Heart right ventricle (tissue), 16 donors: ENCODE measurements at regions of chr4 and their contacts with region 1.

Region 1: DNA sequence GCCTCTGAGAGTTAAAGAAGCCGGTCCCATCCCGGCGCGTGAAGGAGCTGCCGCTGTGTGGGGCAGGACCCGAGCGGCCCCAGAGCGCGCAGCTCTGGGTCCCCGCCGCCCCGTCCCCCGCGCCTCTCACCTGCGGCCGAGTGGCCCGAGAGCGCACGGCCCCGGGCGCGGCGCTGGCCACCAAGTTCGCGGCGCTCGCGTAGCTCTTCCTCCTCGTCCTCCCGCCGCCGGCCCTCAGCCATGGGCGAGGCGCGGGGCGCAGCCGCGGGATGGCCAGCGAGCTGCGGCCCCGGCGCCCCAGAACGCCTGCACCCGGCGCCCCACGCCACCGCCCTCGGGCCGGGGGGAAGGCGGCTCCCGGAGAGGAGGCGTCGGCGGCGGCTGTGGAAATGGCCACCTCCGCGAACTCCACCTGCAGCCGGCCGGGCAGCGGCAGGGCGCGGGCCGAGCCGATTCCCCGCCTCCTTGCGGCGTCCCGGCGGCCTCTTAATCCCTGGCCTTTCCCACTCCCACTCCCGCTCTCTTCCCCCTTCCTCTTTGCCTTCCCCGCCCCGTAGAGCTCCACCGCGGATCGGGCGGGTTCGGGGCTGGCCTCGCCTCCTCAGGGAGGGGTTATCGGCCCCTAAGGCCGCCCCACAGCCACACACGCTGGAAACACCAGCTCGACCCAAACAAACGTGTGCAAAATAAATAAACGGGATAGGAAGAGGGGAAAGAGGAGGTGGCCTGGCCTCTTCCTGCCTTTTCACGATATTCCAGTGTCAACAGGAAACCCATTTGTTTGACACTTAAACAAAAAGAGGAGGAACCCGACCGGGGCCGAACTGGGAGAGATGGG is at the start of gene SH3D19:
- DNase-seq: peak; percentile 77 to 81
- ATAC-seq: peak; percentile 91 to 95 (median 92)
- H3K4me3 ChIP-seq: peak within 1 kb of the TSS; percentile 40 to 93 (median 80)
- H3K27ac ChIP-seq: peak within 1 kb of the TSS; percentile 81 to 98 (median 94)
- H3K4me1 ChIP-seq: peaks cover 4 to 42% (median 30%) of the 10 kb centered on the region in 9 donors
- H3K27me3 ChIP-seq: peaks cover 0 to 35% (median 0%) of the 10 kb centered on the region in 7 donors
- CTCF ChIP-seq: peak in 3 of 9 donors; percentile 25 to 39 (median 35)
- total RNA-seq, gene SH3D19: 97.4 to 175 (median 123) TPM

Region 2: DNA sequence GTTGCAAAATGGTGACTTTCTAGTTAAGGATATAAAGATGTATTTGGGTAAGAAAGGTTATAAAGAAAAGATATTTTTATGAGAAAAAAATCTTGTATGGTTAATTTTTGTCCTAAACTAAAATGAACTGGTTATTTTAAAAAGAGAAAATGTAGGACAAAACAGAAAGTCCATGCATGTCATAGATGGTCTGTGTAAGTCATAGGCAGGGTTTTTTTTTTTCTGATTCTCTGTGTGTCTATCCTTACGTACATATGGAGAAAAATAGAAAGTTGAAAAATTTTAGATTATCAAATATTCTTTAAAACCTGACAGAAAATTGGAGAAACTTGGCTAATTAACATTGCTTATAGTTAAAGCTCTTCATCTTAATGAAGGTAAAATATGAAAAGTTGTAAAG is 2003.1 kb before region 1 on chr4:
- intact Hi-C with region 1: no loop called
- DNase-seq: no peak
- ATAC-seq: no peak
- H3K4me3 ChIP-seq: no peak overlapping the region
- H3K27ac ChIP-seq: no peak overlapping the region
- H3K4me1 ChIP-seq: no peaks in the 10 kb centered on the region
- H3K27me3 ChIP-seq: no peaks in the 10 kb centered on the region
- CTCF ChIP-seq: no peak

Region 3: DNA sequence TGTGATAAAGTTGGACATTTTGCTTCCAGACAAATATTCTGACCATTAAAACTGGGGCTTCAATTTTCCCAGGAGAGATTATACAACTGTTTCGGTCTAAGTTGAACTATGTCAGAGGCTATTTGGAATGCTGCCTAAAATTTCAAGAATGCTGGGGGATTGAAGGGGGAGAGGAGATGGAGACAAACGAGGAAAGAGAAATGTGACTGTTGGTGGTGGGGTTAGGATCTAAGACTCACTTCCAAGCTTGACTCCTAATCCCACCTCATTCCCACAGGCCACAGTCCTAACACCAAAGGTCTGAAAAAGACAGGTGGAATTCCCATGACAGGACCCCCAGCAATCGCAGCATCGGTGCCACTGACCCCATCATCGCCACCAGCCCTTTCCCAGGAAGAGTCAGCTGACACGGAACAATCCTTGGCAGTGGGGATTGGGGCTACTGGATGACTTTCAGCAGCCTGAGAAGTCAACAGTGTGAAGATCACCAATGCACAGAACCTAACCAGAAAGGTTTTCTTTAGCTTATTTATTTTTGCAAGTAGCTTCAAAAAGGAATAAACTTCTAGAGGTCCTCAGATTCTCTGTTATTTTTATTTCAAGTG is 122.4 kb before region 1 on chr4:
- intact Hi-C with region 1: loop called in 1 of 10 experiments (anchors 10 kb)
- DNase-seq: peak in 1 of 2 donors; percentile 22
- ATAC-seq: peak; percentile 25 to 74 (median 50)
- H3K4me3 ChIP-seq: peak overlapping the region in 1 of 10 donors; percentile 2
- H3K27ac ChIP-seq: peak overlapping the region in 9 of 10 donors; percentile 29 to 76 (median 68)
- H3K4me1 ChIP-seq: peaks cover 3 to 88% (median 70%) of the 10 kb centered on the region in 9 donors
- H3K27me3 ChIP-seq: no peaks in the 10 kb centered on the region
- CTCF ChIP-seq: no peak

Region 4: GRCh38 chr4:151284534-151285245 is 40.6 kb before region 1 on chr4:
- intact Hi-C with region 1: loop called in 3 of 10 experiments (anchors 2 to 5 kb)
- DNase-seq: no peak
- ATAC-seq: peak in 7 of 8 donors; percentile 52 to 80 (median 66)
- H3K4me3 ChIP-seq: no peak overlapping the region
- H3K27ac ChIP-seq: peak overlapping the region in 7 of 10 donors; percentile 24 to 64 (median 49)
- H3K4me1 ChIP-seq: peaks cover 0 to 38% (median 17%) of the 10 kb centered on the region in 9 donors
- H3K27me3 ChIP-seq: no peaks in the 10 kb centered on the region
- CTCF ChIP-seq: no peak

Region 5: GRCh38 chr4:151475035-151475714 is 149.8 kb after region 1 on chr4:
- intact Hi-C with region 1: no loop called
- DNase-seq: no peak
- ATAC-seq: no peak
- H3K4me3 ChIP-seq: no peak overlapping the region
- H3K27ac ChIP-seq: no peak overlapping the region
- H3K4me1 ChIP-seq: no peaks in the 10 kb centered on the region
- H3K27me3 ChIP-seq: no peaks in the 10 kb centered on the region
- CTCF ChIP-seq: no peak